ENCODE measurements at regions of chr6 and their contacts with region 1.

Region 1: GRCh38 chr6:75934643-75935472 is 137.6 kb downstream of the IMPG1 start:
- DNase-seq: peak; percentile 50 to 61
- H3K4me3 ChIP-seq: no peak overlapping the region
- H3K4me3 Mint-ChIP-seq: peak overlapping the region; percentile 58
- H3K27ac Mint-ChIP-seq: no peak overlapping the region
- H3K4me1 ChIP-seq: no peaks in the 10 kb centered on the region
- H3K4me1 Mint-ChIP-seq: peaks cover 4% of the 10 kb centered on the region
- H3K27me3 ChIP-seq: no peaks in the 10 kb centered on the region
- H3K27me3 Mint-ChIP-seq: peaks cover 3% of the 10 kb centered on the region
- CTCF ChIP-seq: peak; percentile 54 to 79

Region 2: GRCh38 chr6:75855052-75855451 is 79.8 kb before region 1 on chr6:
- CTCF ChIA-PET with region 1: no interaction called
- POLR2A ChIA-PET with region 1: no interaction called
- intact Hi-C with region 1: loop called (anchors 1 kb)
- DNase-seq: peak in 1 of 2 experiments; percentile 54
- H3K4me3 ChIP-seq: no peak overlapping the region
- H3K4me3 Mint-ChIP-seq: no peak overlapping the region
- H3K27ac Mint-ChIP-seq: no peak overlapping the region
- H3K4me1 ChIP-seq: peaks cover 11% of the 10 kb centered on the region
- H3K4me1 Mint-ChIP-seq: peaks cover 6% of the 10 kb centered on the region
- H3K27me3 ChIP-seq: no peaks in the 10 kb centered on the region
- H3K27me3 Mint-ChIP-seq: no peaks in the 10 kb centered on the region
- CTCF ChIP-seq: peak; percentile 42 to 54

Region 3: GRCh38 chr6:75946146-75946831 is 11.4 kb after region 1 on chr6:
- CTCF ChIA-PET with region 1: interaction called, 3 read pairs
- POLR2A ChIA-PET with region 1: no interaction called
- intact Hi-C with region 1: loop called (anchors 1 kb)
- DNase-seq: no peak
- H3K4me3 ChIP-seq: no peak overlapping the region
- H3K4me3 Mint-ChIP-seq: no peak overlapping the region
- H3K27ac Mint-ChIP-seq: no peak overlapping the region
- H3K4me1 ChIP-seq: peaks cover 9% of the 10 kb centered on the region; the same call in 1 of the 2 replicates
- H3K4me1 Mint-ChIP-seq: peaks cover 18% of the 10 kb centered on the region
- H3K27me3 ChIP-seq: no peaks in the 10 kb centered on the region
- H3K27me3 Mint-ChIP-seq: no peaks in the 10 kb centered on the region
- CTCF ChIP-seq: no peak

Region 4: DNA sequence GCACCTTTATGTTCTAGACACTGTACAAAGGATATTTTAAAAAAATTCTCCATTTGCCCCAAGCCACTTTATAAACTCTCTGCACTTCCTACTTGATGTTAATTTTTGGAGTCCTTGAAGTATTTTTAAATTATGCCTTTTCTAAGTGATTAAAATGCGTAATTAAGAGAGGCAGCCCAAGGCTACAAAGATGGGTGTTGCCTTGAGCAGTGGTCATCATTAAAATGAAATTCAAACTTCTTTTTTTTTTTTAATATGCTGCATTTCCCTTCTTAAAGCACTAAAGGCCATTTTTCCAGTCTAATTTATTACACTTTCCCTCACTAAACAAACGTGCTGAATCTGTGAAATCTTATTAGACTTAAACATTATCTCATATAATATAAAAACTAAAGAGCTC is 35.2 kb after region 1 on chr6:
- CTCF ChIA-PET with region 1: no interaction called
- POLR2A ChIA-PET with region 1: no interaction called
- intact Hi-C with region 1: no loop called
- DNase-seq: no peak
- H3K4me3 ChIP-seq: no peak overlapping the region
- H3K4me3 Mint-ChIP-seq: no peak overlapping the region
- H3K27ac Mint-ChIP-seq: no peak overlapping the region
- H3K4me1 ChIP-seq: no peaks in the 10 kb centered on the region
- H3K4me1 Mint-ChIP-seq: no peaks in the 10 kb centered on the region
- H3K27me3 ChIP-seq: no peaks in the 10 kb centered on the region
- H3K27me3 Mint-ChIP-seq: peaks cover 12% of the 10 kb centered on the region
- CTCF ChIP-seq: no peak

Region 5: GRCh38 chr6:76043690-76044089 is 108.8 kb after region 1 on chr6:
- CTCF ChIA-PET with region 1: no interaction called
- POLR2A ChIA-PET with region 1: no interaction called
- intact Hi-C with region 1: loop called (anchors 10 kb)
- DNase-seq: no peak
- H3K4me3 ChIP-seq: no peak overlapping the region
- H3K4me3 Mint-ChIP-seq: no peak overlapping the region
- H3K27ac Mint-ChIP-seq: no peak overlapping the region
- H3K4me1 ChIP-seq: no peaks in the 10 kb centered on the region
- H3K4me1 Mint-ChIP-seq: no peaks in the 10 kb centered on the region
- H3K27me3 ChIP-seq: no peaks in the 10 kb centered on the region
- H3K27me3 Mint-ChIP-seq: peaks cover 11% of the 10 kb centered on the region
- CTCF ChIP-seq: no peak

Region 6: DNA sequence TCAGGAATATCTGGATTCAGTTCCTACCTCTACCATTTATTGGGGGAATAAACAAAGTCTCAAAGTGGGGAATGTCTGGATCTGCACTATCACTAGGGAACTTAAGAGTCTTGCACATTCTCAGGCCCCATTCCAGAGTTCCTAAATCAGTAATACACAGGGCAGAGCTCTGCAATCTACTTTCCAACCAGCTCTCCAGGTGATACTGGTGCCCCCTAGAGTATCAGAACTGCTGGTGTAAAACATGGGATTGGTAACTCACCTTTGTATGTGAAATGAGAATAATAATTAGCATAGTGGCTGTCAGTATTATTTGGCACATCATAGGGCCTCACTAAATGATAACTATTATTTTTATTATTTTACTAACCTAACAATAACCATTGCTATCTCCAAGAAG is 416.4 kb after region 1 on chr6:
- CTCF ChIA-PET with region 1: interaction called, 6 read pairs
- POLR2A ChIA-PET with region 1: no interaction called
- intact Hi-C with region 1: loop called (anchors 1 kb)
- DNase-seq: peak in 1 of 2 experiments; percentile 35
- H3K4me3 ChIP-seq: no peak overlapping the region
- H3K4me3 Mint-ChIP-seq: no peak overlapping the region
- H3K27ac Mint-ChIP-seq: no peak overlapping the region
- H3K4me1 ChIP-seq: no peaks in the 10 kb centered on the region
- H3K4me1 Mint-ChIP-seq: no peaks in the 10 kb centered on the region
- H3K27me3 ChIP-seq: no peaks in the 10 kb centered on the region
- H3K27me3 Mint-ChIP-seq: no peaks in the 10 kb centered on the region
- CTCF ChIP-seq: peak; percentile 39 to 67